Panc1 (cell line): ENCODE measurements at regions of chr4 and their contacts with region 1.

Region 1: DNA sequence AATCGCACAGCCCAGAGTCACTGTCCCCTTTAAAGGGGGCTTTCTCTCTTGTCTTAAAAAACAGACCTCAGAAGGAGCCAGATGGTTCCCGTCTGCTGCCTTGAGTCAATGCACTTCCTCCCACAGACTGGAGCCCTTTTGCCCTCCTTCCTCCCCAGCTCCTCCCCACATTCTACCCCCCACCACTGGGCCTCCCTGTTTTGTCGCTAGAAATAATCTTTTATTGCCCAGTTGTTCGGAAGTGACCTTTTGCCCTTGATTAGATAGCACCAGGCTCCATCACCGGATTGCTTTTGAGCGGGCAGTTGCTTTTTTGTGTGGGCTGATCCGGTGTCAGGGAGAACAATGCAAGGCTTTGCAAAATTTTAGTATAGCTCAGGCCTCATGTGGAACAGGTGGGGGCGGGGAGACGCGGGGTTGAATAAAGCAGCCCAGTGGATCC is 47.7 kb downstream of the SPRY1 start:
- DNase-seq: no peak
- ATAC-seq: peak; percentile 96
- H3K4me3 ChIP-seq: peak overlapping the region in 1 of 2 experiments; percentile 30; a peak in 2 of 4 replicates
- H3K27ac ChIP-seq: peak overlapping the region; percentile 99
- H3K4me1 ChIP-seq: peaks cover 28% of the 10 kb centered on the region
- H3K27me3 ChIP-seq: no peaks in the 10 kb centered on the region
- CTCF ChIP-seq: no peak

Region 2: GRCh38 chr4:123408471-123409084 is 35.7 kb before region 1 on chr4:
- CTCF ChIA-PET with region 1: no interaction called
- POLR2A ChIA-PET with region 1: no interaction called
- in situ Hi-C with region 1: no loop called
- intact Hi-C with region 1: loop called (anchors 5 kb)
- DNase-seq: no peak
- ATAC-seq: peak; percentile 66
- H3K4me3 ChIP-seq: peak overlapping the region in 1 of 2 experiments; percentile 8; a peak in 2 of 4 replicates
- H3K27ac ChIP-seq: peak overlapping the region; percentile 94
- H3K4me1 ChIP-seq: peaks cover 83% of the 10 kb centered on the region
- H3K27me3 ChIP-seq: no peaks in the 10 kb centered on the region
- CTCF ChIP-seq: no peak

Region 3: GRCh38 chr4:123455360-123455759 is 11.0 kb after region 1 on chr4:
- CTCF ChIA-PET with region 1: no interaction called
- POLR2A ChIA-PET with region 1: no interaction called
- in situ Hi-C with region 1: no loop called
- intact Hi-C with region 1: no loop called
- DNase-seq: no peak
- ATAC-seq: no peak
- H3K4me3 ChIP-seq: no peak overlapping the region
- H3K27ac ChIP-seq: peak overlapping the region; percentile 56; the same call in 1 of the 2 replicates
- H3K4me1 ChIP-seq: peaks cover 13% of the 10 kb centered on the region
- H3K27me3 ChIP-seq: no peaks in the 10 kb centered on the region
- CTCF ChIP-seq: no peak

Region 4: GRCh38 chr4:123477711-123478209 is 33.4 kb after region 1 on chr4:
- CTCF ChIA-PET with region 1: no interaction called
- POLR2A ChIA-PET with region 1: no interaction called
- in situ Hi-C with region 1: no loop called
- intact Hi-C with region 1: loop called (anchors 5 kb)
- DNase-seq: no peak
- ATAC-seq: no peak
- H3K4me3 ChIP-seq: no peak overlapping the region
- H3K27ac ChIP-seq: peak overlapping the region; percentile 98
- H3K4me1 ChIP-seq: peaks cover 31% of the 10 kb centered on the region
- H3K27me3 ChIP-seq: no peaks in the 10 kb centered on the region
- CTCF ChIP-seq: no peak

Region 5: GRCh38 chr4:123631786-123632692 is 187.7 kb after region 1 on chr4:
- CTCF ChIA-PET with region 1: no interaction called
- POLR2A ChIA-PET with region 1: no interaction called
- in situ Hi-C with region 1: no loop called
- intact Hi-C with region 1: no loop called
- DNase-seq: no peak
- ATAC-seq: no peak
- H3K4me3 ChIP-seq: no peak overlapping the region
- H3K27ac ChIP-seq: peak overlapping the region; percentile 52; the same call in 1 of the 2 replicates
- H3K4me1 ChIP-seq: no peaks in the 10 kb centered on the region
- H3K27me3 ChIP-seq: no peaks in the 10 kb centered on the region
- CTCF ChIP-seq: no peak